Activated T-helper 1 cell treated with anti-CD3 and anti-CD28 coated beads, Interleukin-12 subunit alpha, Interleukin-12 subunit beta, Interleukin-2, Interleukin-4 antibody, amounts not matched to agents 30 ng/mL and 10 ng/mL and 1 ng/mL, durations not matched to agents 14 hours and 24 hours and 36 hours (primary cell): ENCODE measurements at regions of chr14 and their contacts with region 1.

Region 1: DNA sequence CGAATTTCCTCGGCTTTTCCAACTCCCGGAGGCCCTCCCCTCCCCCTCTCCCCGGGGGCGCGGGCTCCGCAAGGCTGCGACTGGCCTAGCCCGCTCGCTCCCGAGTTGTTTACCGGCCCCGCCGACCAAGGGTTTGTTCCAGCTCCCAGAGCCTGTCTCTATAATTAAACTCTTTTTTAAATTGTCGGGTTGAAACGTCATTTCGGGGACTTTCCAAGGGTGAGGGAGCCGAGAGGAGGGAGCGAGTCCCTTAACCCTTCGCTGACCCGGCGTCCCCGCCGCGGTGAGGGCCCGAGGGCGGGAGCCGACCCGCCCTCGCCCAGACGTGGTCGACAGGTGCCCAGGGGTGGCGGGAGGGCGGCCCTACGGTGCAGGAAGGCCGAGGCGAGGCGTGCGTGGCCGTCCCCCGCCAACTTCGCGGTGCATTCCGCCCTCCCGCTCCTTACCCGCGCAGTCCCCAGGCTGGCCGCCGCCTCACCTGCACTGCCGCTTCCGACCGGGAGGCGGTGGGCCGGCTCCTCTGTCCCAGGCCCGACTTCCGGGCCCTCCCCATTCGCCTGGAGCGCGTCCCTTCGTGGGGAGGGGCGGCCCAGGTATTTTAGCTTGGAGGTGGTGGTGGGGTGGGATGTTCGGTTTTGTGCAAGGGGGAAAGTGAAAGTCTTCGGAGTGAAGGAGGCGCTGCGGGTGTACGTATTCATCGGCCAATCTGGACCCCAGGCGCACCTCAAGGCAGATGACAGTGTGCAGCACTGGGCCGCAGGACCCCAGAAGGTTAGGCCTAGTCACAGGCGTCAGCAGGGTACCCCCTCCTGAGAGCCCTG is 2.9 kb upstream of the ZFP36L1 start:
- DNase-seq: peak; percentile 80
- H3K4me3 Mint-ChIP-seq: peak overlapping the region; percentile 84
- H3K27ac Mint-ChIP-seq: peak overlapping the region; percentile 95
- H3K4me1 Mint-ChIP-seq: peaks cover 51% of the 10 kb centered on the region
- H3K27me3 Mint-ChIP-seq: no peaks in the 10 kb centered on the region

Region 2: GRCh38 chr14:67695394-67695949 is 1100.3 kb before region 1 on chr14 and contains the start of gene RDH11:
- intact Hi-C with region 1: loop called (anchors 5 kb)
- DNase-seq: peak; percentile 80
- H3K4me3 Mint-ChIP-seq: peak within 1 kb of the TSS; percentile 95
- H3K27ac Mint-ChIP-seq: peak within 1 kb of the TSS; percentile 98
- H3K4me1 Mint-ChIP-seq: peaks cover 42% of the 10 kb centered on the region
- H3K27me3 Mint-ChIP-seq: no peaks in the 10 kb centered on the region
- total RNA-seq, gene RDH11: 63.2 and 66.1 TPM in 2 replicates

Region 3: GRCh38 chr14:68210729-68211299 is 585.0 kb before region 1 on chr14:
- intact Hi-C with region 1: loop called (anchors 1 kb)
- DNase-seq: peak; percentile 55
- H3K4me3 Mint-ChIP-seq: peak overlapping the region; percentile 66
- H3K27ac Mint-ChIP-seq: peak overlapping the region; percentile 73
- H3K4me1 Mint-ChIP-seq: peaks cover 49% of the 10 kb centered on the region
- H3K27me3 Mint-ChIP-seq: no peaks in the 10 kb centered on the region

Region 4: GRCh38 chr14:68312884-68313610 is 482.8 kb before region 1 on chr14:
- intact Hi-C with region 1: no loop called
- DNase-seq: no peak
- H3K4me3 Mint-ChIP-seq: no peak overlapping the region
- H3K27ac Mint-ChIP-seq: no peak overlapping the region
- H3K4me1 Mint-ChIP-seq: peaks cover 22% of the 10 kb centered on the region
- H3K27me3 Mint-ChIP-seq: no peaks in the 10 kb centered on the region

Region 5: DNA sequence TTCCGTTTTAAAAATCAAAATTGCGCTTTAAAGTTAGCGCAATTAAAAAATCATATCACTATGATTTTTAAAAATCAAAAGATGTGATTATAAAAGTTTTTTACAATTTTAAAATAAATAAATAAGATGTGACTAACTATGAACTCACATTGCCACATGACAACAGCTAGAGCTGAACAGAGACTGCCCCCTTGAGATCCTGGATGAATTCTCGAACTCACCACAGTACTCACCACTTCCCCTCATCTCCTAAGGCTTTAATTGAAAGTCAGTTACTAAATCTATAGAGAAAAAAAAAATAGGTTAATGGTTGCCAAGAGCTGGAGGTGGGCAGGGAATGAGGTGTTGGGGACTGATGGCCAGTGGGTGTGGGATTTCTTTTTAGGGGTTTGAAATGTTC is 387.1 kb before region 1 on chr14:
- intact Hi-C with region 1: loop called (anchors 10 kb)
- DNase-seq: no peak
- H3K4me3 Mint-ChIP-seq: no peak overlapping the region
- H3K27ac Mint-ChIP-seq: no peak overlapping the region
- H3K4me1 Mint-ChIP-seq: peaks cover 34% of the 10 kb centered on the region
- H3K27me3 Mint-ChIP-seq: no peaks in the 10 kb centered on the region

Region 6: GRCh38 chr14:68816262-68816942 is 20.6 kb after region 1 on chr14:
- intact Hi-C with region 1: loop called (anchors 1 kb)
- DNase-seq: peak; percentile 84
- H3K4me3 Mint-ChIP-seq: peak overlapping the region; percentile 76
- H3K27ac Mint-ChIP-seq: peak overlapping the region; percentile 90
- H3K4me1 Mint-ChIP-seq: peaks cover 58% of the 10 kb centered on the region
- H3K27me3 Mint-ChIP-seq: no peaks in the 10 kb centered on the region

Region 7: GRCh38 chr14:69398053-69398817 is 602.4 kb after region 1 on chr14 and contains the starts of genes ERH and SLC39A9:
- intact Hi-C with region 1: loop called (anchors 5 kb)
- DNase-seq: peak; percentile 91
- H3K4me3 Mint-ChIP-seq: peak within 1 kb of the TSS; percentile 96
- H3K27ac Mint-ChIP-seq: peak within 1 kb of the TSS; percentile 98
- H3K4me1 Mint-ChIP-seq: peaks cover 63% of the 10 kb centered on the region
- H3K27me3 Mint-ChIP-seq: no peaks in the 10 kb centered on the region
- total RNA-seq, gene ERH: 400 and 421 TPM in 2 replicates
- total RNA-seq, gene SLC39A9: 51.6 and 53.7 TPM in 2 replicates